Naive thymus-derived CD4-positive, alpha-beta T cell (primary cell): ENCODE measurements at regions of chr5 and their contacts with region 1.

Region 1: DNA sequence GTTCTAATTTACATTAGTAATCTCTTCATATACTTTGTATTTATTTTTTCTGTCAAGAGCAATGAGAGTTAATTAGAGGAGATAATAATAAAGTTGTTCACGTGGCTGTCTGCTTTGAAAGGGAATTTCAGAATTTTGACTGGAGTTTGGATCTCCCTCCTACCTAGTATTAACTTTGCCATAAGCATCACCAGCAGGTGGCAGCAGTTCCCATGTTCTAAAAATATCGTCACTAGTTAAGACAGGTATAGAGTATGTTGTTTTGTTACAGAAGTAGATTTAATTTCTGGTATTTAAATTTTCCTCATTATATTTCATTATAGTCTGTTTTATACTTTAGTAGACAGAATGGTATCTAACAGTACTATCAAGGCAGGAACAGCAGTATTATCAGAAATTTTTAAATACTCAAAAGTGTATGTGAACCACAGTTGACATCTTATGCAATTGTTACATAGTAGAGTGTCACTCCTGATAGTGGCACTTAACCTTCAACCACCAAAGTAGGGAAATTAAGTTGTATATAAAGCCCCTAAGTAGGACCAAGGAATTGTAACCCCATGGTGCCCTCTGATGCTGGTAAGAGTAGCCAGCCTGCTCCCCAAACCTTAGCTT is 20.4 kb downstream of the GNPDA1 start:
- DNase-seq: peak; percentile 49 to 77 (median 69)
- ATAC-seq: peak; percentile 88
- H3K4me3 ChIP-seq: no peak overlapping the region
- H3K4me3 Mint-ChIP-seq: no peak overlapping the region
- H3K27ac ChIP-seq: no peak overlapping the region
- H3K27ac Mint-ChIP-seq: peak overlapping the region in 2 of 9 donors; percentile 52 to 71
- H3K4me1 ChIP-seq: no peaks in the 10 kb centered on the region
- H3K4me1 Mint-ChIP-seq: peaks cover 4 to 18% (median 7%) of the 10 kb centered on the region in 7 donors
- H3K27me3 ChIP-seq: no peaks in the 10 kb centered on the region
- H3K27me3 Mint-ChIP-seq: no peaks in the 10 kb centered on the region

Region 2: DNA sequence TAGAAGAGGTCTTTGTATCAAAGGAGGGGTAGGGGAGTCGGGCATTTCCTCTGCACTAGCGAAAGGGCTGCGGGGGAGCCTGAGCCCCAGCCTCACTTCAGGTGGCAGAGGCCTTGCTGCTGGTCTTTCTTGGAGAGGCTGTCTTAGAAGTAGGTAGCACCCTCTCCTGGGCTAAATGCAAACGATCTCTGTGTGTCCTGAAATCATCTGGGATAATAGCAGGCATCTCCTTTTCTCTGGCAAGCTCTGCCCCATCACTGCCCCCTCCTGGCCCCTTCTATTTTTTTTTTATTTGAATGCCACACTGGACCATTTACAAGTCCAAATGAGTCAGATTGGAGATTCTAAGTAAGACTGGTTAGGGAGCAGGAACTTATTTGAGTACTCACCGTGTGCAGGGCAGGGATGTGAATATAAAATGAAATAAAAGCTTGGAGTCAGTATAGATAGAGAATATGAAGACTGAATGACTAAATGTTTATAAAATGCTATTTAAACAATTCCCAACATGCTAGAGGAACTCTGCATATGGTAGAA is 556.4 kb after region 1 on chr5:
- CTCF ChIA-PET with region 1: no interaction called
- POLR2A ChIA-PET with region 1: no interaction called
- intact Hi-C with region 1: loop called in 1 of 2 experiments (anchors 5 kb)
- DNase-seq: peak in 5 of 9 donors; percentile 2 to 33 (median 20)
- ATAC-seq: peak; percentile 48
- H3K4me3 ChIP-seq: no peak overlapping the region
- H3K4me3 Mint-ChIP-seq: no peak overlapping the region
- H3K27ac ChIP-seq: no peak overlapping the region
- H3K27ac Mint-ChIP-seq: no peak overlapping the region
- H3K4me1 ChIP-seq: no peaks in the 10 kb centered on the region
- H3K4me1 Mint-ChIP-seq: peaks cover 0 to 20% (median 9%) of the 10 kb centered on the region in 7 donors
- H3K27me3 ChIP-seq: peaks cover 2 to 10% of the 10 kb centered on the region in 2 donors
- H3K27me3 Mint-ChIP-seq: peaks cover 17 to 51% (median 25%) of the 10 kb centered on the region in 5 donors

Region 3: DNA sequence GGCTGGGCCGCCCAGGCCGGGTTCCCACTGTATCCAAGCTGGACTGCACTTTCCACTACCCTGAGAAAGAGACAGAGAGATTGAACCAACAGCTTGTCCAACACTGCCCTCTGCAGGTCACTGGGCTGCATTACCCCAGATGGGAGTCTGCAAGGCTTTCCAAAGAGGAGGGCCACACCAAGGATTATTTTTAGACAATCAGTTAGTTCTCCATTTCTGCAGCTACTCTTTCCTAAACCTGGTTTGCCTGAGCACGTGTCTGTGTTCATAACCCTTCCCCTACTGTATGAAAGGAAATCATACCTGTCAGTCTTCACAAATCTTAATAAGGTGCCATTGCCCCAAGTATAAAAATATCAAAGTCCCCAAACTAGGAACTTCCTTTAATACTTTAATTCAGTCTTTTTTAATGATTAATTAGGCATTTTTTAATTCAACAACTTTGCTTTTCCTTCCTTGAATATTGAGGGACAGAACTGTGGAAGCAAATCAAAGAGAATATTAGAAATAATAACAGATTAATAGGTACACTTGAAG is 706.8 kb after region 1 on chr5:
- CTCF ChIA-PET with region 1: interaction called, 4 read pairs
- POLR2A ChIA-PET with region 1: no interaction called
- intact Hi-C with region 1: loop called (anchors 1 to 5 kb)
- DNase-seq: peak; percentile 53 to 79 (median 68)
- ATAC-seq: peak; percentile 95
- H3K4me3 ChIP-seq: no peak overlapping the region
- H3K4me3 Mint-ChIP-seq: no peak overlapping the region
- H3K27ac ChIP-seq: no peak overlapping the region
- H3K27ac Mint-ChIP-seq: no peak overlapping the region
- H3K4me1 ChIP-seq: no peaks in the 10 kb centered on the region
- H3K4me1 Mint-ChIP-seq: peaks cover 0 to 10% (median 2%) of the 10 kb centered on the region in 7 donors
- H3K27me3 ChIP-seq: no peaks in the 10 kb centered on the region
- H3K27me3 Mint-ChIP-seq: peaks cover 0 to 19% (median 5%) of the 10 kb centered on the region in 5 donors